ENCODE measurements at regions of chr9 and their contacts with region 1.

Region 1: GRCh38 chr9:72280913-72281500 is 84.0 kb downstream of the ZFAND5 start:
- DNase-seq: peak; percentile 50 to 86 (median 62)
- ATAC-seq: peak; percentile 91
- H3K4me3 ChIP-seq: no peak overlapping the region
- H3K4me3 Mint-ChIP-seq: no peak overlapping the region
- H3K27ac ChIP-seq: no peak overlapping the region
- H3K27ac Mint-ChIP-seq: no peak overlapping the region
- H3K4me1 ChIP-seq: no peaks in the 10 kb centered on the region
- H3K4me1 Mint-ChIP-seq: no peaks in the 10 kb centered on the region
- H3K27me3 ChIP-seq: no peaks in the 10 kb centered on the region
- H3K27me3 Mint-ChIP-seq: no peaks in the 10 kb centered on the region
- CTCF ChIP-seq: peak; percentile 96

Region 2: DNA sequence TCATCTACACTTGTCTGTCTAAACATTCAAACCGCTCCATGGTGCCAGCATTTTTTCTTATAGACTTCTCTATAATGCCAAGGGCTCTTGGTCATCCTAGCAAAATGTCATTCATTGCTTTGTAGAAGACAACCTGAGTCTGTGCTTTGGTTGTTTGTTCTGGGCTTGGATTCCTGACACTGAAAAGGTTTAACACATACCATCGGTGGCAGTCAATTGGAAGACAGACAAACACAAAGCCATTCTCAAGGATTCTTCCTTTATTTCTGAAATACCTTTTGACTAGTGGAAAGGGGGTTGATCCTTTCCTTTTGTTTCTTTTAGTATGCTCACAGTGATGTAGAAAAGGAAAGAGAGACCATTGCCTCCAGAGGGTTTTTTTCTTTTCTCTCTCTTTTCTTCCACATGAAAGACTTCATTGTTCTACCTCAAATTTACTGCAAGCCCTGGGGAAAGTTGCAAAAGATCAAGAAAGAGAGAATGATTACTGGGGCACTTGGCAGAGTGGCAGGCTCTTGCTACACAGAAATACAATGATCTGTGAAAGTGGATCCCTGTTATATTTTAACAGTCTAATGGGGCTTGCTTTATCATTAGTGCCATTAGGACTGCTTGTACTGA is 174.0 kb after region 1 on chr9:
- CTCF ChIA-PET with region 1: no interaction called
- POLR2A ChIA-PET with region 1: no interaction called
- intact Hi-C with region 1: no loop called
- DNase-seq: no peak
- ATAC-seq: no peak
- H3K4me3 ChIP-seq: no peak overlapping the region
- H3K4me3 Mint-ChIP-seq: no peak overlapping the region
- H3K27ac ChIP-seq: no peak overlapping the region
- H3K27ac Mint-ChIP-seq: no peak overlapping the region
- H3K4me1 ChIP-seq: no peaks in the 10 kb centered on the region
- H3K4me1 Mint-ChIP-seq: peaks cover 21% of the 10 kb centered on the region
- H3K27me3 ChIP-seq: no peaks in the 10 kb centered on the region
- H3K27me3 Mint-ChIP-seq: no peaks in the 10 kb centered on the region
- CTCF ChIP-seq: no peak

Region 3: GRCh38 chr9:72592502-72593403 is 311.7 kb after region 1 on chr9:
- CTCF ChIA-PET with region 1: interaction called, 16 read pairs
- POLR2A ChIA-PET with region 1: no interaction called
- intact Hi-C with region 1: loop called (anchors 1 kb)
- DNase-seq: peak in 8 of 14 experiments; percentile 2 to 80 (median 34)
- ATAC-seq: peak; percentile 80
- H3K4me3 ChIP-seq: no peak overlapping the region
- H3K4me3 Mint-ChIP-seq: no peak overlapping the region
- H3K27ac ChIP-seq: no peak overlapping the region
- H3K27ac Mint-ChIP-seq: no peak overlapping the region
- H3K4me1 ChIP-seq: no peaks in the 10 kb centered on the region
- H3K4me1 Mint-ChIP-seq: peaks cover 4% of the 10 kb centered on the region
- H3K27me3 ChIP-seq: no peaks in the 10 kb centered on the region
- H3K27me3 Mint-ChIP-seq: peaks cover 4% of the 10 kb centered on the region
- CTCF ChIP-seq: peak; percentile 95

Region 4: GRCh38 chr9:72827950-72828731 is 547.1 kb after region 1 on chr9:
- CTCF ChIA-PET with region 1: interaction called, 7 read pairs
- POLR2A ChIA-PET with region 1: no interaction called
- intact Hi-C with region 1: loop called (anchors 2 to 10 kb)
- DNase-seq: no peak
- ATAC-seq: no peak
- H3K4me3 ChIP-seq: no peak overlapping the region
- H3K4me3 Mint-ChIP-seq: no peak overlapping the region
- H3K27ac ChIP-seq: no peak overlapping the region
- H3K27ac Mint-ChIP-seq: no peak overlapping the region
- H3K4me1 ChIP-seq: no peaks in the 10 kb centered on the region
- H3K4me1 Mint-ChIP-seq: no peaks in the 10 kb centered on the region
- H3K27me3 ChIP-seq: no peaks in the 10 kb centered on the region
- H3K27me3 Mint-ChIP-seq: peaks cover 4% of the 10 kb centered on the region
- CTCF ChIP-seq: no peak

Region 5: DNA sequence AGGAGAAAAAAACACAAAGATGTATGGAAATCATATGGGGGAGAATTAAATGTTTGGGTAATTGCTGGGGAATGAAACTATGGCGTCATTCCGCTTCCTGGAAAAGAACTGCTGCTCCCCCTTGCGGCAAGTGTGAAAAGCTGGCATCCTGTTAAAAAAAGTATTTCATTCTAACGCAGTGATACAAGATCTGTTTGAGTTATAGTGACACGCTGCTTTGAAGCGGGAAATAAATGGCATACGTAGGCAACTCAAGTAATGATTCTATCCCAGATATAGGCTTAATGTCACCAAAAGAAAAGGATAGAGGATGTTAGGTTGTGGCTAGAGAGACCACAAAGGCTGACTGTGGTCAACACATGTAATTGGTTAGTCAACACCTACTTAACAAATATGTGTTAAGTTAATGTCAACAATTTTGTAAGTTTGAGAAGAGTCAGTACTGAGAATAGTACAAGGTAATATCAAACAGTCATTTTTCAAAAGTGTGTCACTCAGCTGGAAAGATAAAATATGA is 742.1 kb after region 1 on chr9:
- CTCF ChIA-PET with region 1: interaction called, 9 read pairs
- POLR2A ChIA-PET with region 1: no interaction called
- intact Hi-C with region 1: loop called (anchors 1 kb)
- DNase-seq: peak in 13 of 14 experiments; percentile 2 to 71 (median 19)
- ATAC-seq: peak; percentile 32
- H3K4me3 ChIP-seq: no peak overlapping the region
- H3K4me3 Mint-ChIP-seq: no peak overlapping the region
- H3K27ac ChIP-seq: no peak overlapping the region
- H3K27ac Mint-ChIP-seq: no peak overlapping the region
- H3K4me1 ChIP-seq: peaks cover 4% of the 10 kb centered on the region
- H3K4me1 Mint-ChIP-seq: peaks cover 7% of the 10 kb centered on the region
- H3K27me3 ChIP-seq: no peaks in the 10 kb centered on the region
- H3K27me3 Mint-ChIP-seq: peaks cover 20% of the 10 kb centered on the region
- CTCF ChIP-seq: peak; percentile 69

Region 6: DNA sequence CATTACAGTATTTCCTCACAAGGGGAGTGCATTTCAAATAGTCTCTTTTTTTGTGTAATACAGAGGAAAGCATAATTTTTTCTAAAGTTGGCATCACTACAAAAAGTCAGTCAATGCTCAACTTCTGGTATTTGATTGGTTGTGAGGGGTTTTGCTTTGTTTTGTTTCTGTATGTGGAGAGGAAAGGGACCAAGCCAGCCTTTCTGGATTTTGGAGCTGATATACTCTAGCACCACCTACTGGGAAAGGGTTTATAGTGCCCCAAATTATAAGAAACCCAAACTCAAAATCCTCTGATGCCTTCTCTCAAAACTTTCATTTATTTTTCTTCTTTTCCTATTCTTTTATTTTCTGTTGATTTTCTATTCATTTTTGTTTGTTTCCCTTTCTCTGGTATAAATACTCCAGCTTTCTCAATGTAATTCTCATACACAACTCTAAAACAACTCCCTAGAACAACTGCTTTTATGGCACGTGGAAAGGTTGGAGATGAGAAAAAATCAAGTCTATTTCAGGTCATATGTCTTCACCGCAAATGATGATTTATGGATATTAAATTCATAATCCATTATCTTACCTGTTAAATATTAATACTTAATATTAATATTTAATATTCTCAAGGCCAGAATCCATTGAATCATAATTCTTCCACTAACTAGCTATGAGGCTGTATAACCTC is 801.1 kb after region 1 on chr9:
- CTCF ChIA-PET with region 1: no interaction called
- POLR2A ChIA-PET with region 1: no interaction called
- intact Hi-C with region 1: loop called (anchors 1 to 2 kb)
- DNase-seq: peak in 3 of 14 experiments; percentile 21 to 49 (median 38)
- ATAC-seq: peak; percentile 62
- H3K4me3 ChIP-seq: no peak overlapping the region
- H3K4me3 Mint-ChIP-seq: no peak overlapping the region
- H3K27ac ChIP-seq: no peak overlapping the region
- H3K27ac Mint-ChIP-seq: no peak overlapping the region
- H3K4me1 ChIP-seq: no peaks in the 10 kb centered on the region
- H3K4me1 Mint-ChIP-seq: no peaks in the 10 kb centered on the region
- H3K27me3 ChIP-seq: peaks cover 0 to 4% of the 10 kb centered on the region in 2 experiments
- H3K27me3 Mint-ChIP-seq: peaks cover 37% of the 10 kb centered on the region
- CTCF ChIP-seq: peak; percentile 72

Region 7: GRCh38 chr9:73183917-73184861 is 903.2 kb after region 1 on chr9:
- CTCF ChIA-PET with region 1: no interaction called
- POLR2A ChIA-PET with region 1: no interaction called
- intact Hi-C with region 1: loop called in 1 of 2 experiments (anchors 5 kb)
- DNase-seq: peak in 3 of 14 experiments; percentile 71 to 75 (median 74)
- ATAC-seq: no peak
- H3K4me3 ChIP-seq: no peak overlapping the region
- H3K4me3 Mint-ChIP-seq: no peak overlapping the region
- H3K27ac ChIP-seq: no peak overlapping the region
- H3K27ac Mint-ChIP-seq: no peak overlapping the region
- H3K4me1 ChIP-seq: no peaks in the 10 kb centered on the region
- H3K4me1 Mint-ChIP-seq: no peaks in the 10 kb centered on the region
- H3K27me3 ChIP-seq: peaks cover 3 to 21% of the 10 kb centered on the region in 2 experiments
- H3K27me3 Mint-ChIP-seq: peaks cover 11% of the 10 kb centered on the region
- CTCF ChIP-seq: peak; percentile 78